ENCODE measurements at regions of chr18 and their contacts with region 1.

Region 1: DNA sequence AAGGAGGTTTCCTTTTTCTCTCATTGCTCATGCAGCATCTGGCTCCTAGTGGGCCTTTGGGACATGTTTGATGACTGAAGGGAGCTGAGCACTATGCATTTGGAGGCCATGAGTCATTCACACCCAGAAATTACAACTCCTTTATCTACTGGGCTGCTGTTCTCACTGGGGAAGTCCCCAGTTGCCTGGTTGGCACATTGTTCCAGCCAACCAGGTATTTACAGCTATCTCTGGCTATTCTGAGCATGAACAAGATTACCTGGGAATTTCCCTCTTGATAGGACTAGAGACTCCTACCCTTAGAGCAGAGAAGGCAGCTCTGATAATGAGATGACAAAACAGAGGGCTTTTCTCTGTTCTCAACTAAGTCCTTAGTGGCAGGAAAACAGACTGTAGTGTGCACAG is 206.5 kb downstream of the SETBP1 start:
- DNase-seq: peak; percentile 45
- H3K4me3 Mint-ChIP-seq: peak overlapping the region; percentile 71
- H3K27ac Mint-ChIP-seq: peak overlapping the region; percentile 99
- H3K4me1 Mint-ChIP-seq: peaks cover 31% of the 10 kb centered on the region
- H3K27me3 Mint-ChIP-seq: no peaks in the 10 kb centered on the region

Region 2: DNA sequence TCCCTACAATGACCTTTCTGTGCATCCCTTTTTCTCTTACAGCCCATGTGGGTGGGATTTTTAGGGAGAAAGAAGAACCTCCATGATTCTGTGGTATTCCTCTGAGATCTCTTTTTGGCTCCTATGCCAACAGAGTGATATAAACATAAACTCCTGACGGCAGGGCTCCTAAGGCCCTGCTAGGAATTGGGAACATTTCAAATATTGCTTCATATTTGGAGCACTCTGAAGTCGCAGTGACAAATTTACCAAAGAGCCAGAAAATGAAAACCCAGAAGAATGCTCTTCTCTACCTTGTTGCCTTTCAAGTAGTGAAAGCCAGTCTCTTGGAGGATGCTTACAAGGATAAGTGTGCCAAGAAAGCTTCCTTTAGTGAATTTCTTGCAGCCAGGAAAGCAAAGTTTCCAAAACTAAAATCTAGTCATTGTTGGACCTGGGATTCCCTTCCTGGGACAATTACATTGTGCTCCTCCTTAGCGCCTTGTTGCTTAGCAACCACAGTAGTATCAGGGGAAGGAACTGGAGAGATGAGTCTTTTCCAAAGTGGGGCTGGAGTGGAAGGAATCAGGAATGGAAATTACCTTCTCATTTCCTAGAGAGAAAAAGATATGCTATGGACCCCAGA is 213.9 kb before region 1 on chr18:
- intact Hi-C with region 1: no loop called
- DNase-seq: no peak
- H3K4me3 Mint-ChIP-seq: no peak overlapping the region
- H3K27ac Mint-ChIP-seq: no peak overlapping the region
- H3K4me1 Mint-ChIP-seq: peaks cover 11% of the 10 kb centered on the region
- H3K27me3 Mint-ChIP-seq: peaks cover 37% of the 10 kb centered on the region

Region 3: GRCh38 chr18:44725300-44726096 is 161.7 kb before region 1 on chr18:
- intact Hi-C with region 1: loop called (anchors 1 kb)
- DNase-seq: peak; percentile 72
- H3K4me3 Mint-ChIP-seq: peak overlapping the region; percentile 38
- H3K27ac Mint-ChIP-seq: peak overlapping the region; percentile 88
- H3K4me1 Mint-ChIP-seq: peaks cover 96% of the 10 kb centered on the region
- H3K27me3 Mint-ChIP-seq: no peaks in the 10 kb centered on the region

Region 4: GRCh38 chr18:44733069-44733753 is 154.0 kb before region 1 on chr18:
- intact Hi-C with region 1: loop called (anchors 1 kb)
- DNase-seq: peak; percentile 11
- H3K4me3 Mint-ChIP-seq: peak overlapping the region; percentile 61
- H3K27ac Mint-ChIP-seq: peak overlapping the region; percentile 79
- H3K4me1 Mint-ChIP-seq: peaks cover 79% of the 10 kb centered on the region
- H3K27me3 Mint-ChIP-seq: no peaks in the 10 kb centered on the region

Region 5: DNA sequence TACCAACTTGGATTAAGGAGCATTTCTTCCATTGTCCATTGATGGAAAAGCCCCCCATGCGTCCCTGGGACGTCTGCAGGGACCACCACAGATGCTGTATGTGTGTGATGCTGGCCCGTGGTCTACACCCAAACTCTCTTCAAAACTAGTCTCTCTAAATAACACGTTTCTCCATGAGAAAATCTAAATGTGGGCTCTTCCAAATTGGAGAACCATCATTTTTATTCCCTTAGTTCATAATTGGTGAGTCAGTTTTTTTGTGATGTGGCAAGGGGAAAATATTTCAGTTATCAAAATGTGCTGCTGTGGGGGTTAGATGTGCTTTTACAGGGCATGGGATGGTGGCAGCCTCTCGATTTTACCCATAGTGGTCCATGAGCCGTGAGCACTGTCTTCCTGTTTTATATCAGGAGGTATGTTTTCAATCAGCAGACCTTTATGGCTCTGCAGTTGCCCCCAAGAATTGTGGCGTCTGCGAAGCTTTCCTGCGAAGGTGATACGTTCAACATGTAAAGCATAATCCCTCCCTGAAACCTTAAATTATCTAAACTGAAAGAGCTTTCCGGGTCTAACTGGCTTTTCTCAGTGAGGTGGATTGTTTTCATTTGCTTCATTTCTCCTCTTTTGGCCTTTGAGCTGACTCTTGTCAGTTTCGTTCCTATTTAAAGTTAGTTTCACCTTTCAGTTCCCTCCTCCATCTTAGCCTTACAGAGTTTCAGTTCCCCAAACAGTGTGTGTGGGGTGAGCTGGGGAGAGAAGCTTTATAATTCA is 128.2 kb before region 1 on chr18:
- intact Hi-C with region 1: loop called (anchors 1 kb)
- DNase-seq: peak; percentile 14
- H3K4me3 Mint-ChIP-seq: peak overlapping the region; percentile 75
- H3K27ac Mint-ChIP-seq: peak overlapping the region; percentile 98
- H3K4me1 Mint-ChIP-seq: peaks cover 51% of the 10 kb centered on the region
- H3K27me3 Mint-ChIP-seq: peaks cover 5% of the 10 kb centered on the region

Region 6: DNA sequence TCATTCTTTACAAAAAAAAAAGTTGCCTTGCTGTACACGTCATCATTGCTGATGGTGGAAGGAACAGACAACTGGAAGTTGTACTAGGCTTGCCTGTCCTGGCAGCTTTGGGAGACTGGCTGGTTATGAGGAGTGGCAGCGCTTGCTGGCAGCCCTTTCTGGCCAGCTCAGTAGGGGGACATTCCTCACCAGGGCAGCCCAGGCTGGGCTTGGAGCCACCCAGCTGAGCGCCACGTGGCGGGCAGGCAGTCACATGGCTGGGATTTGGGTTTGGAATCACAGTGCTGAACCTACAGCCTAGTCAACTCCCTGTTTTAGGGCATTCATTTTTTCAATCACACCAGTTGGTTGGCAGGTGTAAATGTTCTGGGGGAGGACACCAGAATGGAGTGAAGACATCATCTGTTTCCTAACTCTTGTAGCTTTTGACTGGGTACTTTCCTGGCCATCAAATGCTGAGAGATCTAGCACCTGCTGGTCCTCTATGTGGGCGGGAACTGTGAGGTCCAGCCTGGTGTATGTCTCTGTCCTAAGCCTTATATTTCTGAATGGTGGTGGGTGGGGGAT is 67.2 kb before region 1 on chr18:
- intact Hi-C with region 1: loop called (anchors 1 kb)
- DNase-seq: no peak
- H3K4me3 Mint-ChIP-seq: no peak overlapping the region
- H3K27ac Mint-ChIP-seq: no peak overlapping the region
- H3K4me1 Mint-ChIP-seq: peaks cover 19% of the 10 kb centered on the region
- H3K27me3 Mint-ChIP-seq: peaks cover 14% of the 10 kb centered on the region

Region 7: GRCh38 chr18:44838971-44839666 is 48.1 kb before region 1 on chr18:
- intact Hi-C with region 1: loop called (anchors 1 kb)
- DNase-seq: peak; percentile 73
- H3K4me3 Mint-ChIP-seq: peak overlapping the region; percentile 40
- H3K27ac Mint-ChIP-seq: peak overlapping the region; percentile 59
- H3K4me1 Mint-ChIP-seq: peaks cover 56% of the 10 kb centered on the region
- H3K27me3 Mint-ChIP-seq: peaks cover 5% of the 10 kb centered on the region